ENCODE measurements at regions of chr2 and their contacts with region 1.

Region 1: GRCh38 chr2:216681683-216682082 is 13.7 kb downstream of the IGFBP5 start:
- DNase-seq: no peak
- ATAC-seq: no peak
- H3K4me3 ChIP-seq: no peak overlapping the region
- H3K27ac ChIP-seq: no peak overlapping the region
- H3K4me1 ChIP-seq: no peaks in the 10 kb centered on the region
- H3K27me3 ChIP-seq: peaks cover 3 to 45% of the 10 kb centered on the region in 2 experiments; a peak in 4 of 5 replicates
- CTCF ChIP-seq: no peak
- EP300 ChIP-seq: no peak
- POLR2A ChIP-seq: no peak
- RAD21 ChIP-seq: no peak

Region 2: DNA sequence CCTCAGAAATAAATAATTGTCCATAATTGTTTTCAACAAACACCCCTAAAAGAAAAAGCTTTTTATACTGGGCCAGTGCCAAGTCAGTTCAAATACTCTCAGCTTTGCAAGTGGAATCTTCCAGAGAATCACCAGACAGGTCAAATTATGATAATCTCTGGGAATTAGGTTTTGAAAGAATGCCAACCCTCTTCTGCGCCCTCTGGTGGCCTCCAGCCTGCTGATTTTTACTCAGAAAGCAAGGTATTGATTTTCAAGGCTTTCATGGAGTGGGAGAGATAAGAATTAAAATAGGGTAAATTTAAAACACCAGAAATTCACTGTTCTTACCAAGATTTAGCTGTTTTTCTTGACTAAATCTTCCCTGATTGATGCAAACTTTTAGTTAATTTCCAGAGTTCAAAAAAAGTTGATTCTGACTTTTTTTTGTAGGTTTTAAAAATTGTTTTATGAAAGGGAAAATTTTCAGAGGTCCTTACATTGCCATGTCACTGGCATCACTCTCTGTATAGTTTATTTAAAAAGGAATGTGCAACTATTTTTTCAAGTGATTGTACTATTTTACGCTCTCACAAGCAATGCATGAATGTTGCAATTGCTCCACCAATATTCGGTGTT is 461.1 kb after region 1 on chr2:
- CTCF ChIA-PET with region 1: interaction called, 9 read pairs
- POLR2A ChIA-PET with region 1: no interaction called
- in situ Hi-C with region 1: no loop called
- intact Hi-C with region 1: loop called (anchors 1 kb)
- DNase-seq: peak; percentile 38
- ATAC-seq: peak; percentile 64
- H3K4me3 ChIP-seq: no peak overlapping the region
- H3K27ac ChIP-seq: no peak overlapping the region
- H3K4me1 ChIP-seq: no peaks in the 10 kb centered on the region
- H3K27me3 ChIP-seq: 0 out of 5 replicates have a peak, but pooled peaks cover 0 to under 1% of the 10 kb centered on the region in 2 experiments
- CTCF ChIP-seq: peak; percentile 76
- EP300 ChIP-seq: no peak
- POLR2A ChIP-seq: no peak
- RAD21 ChIP-seq: peak; percentile 55; the same call in 1 of the 2 replicates

Region 3: DNA sequence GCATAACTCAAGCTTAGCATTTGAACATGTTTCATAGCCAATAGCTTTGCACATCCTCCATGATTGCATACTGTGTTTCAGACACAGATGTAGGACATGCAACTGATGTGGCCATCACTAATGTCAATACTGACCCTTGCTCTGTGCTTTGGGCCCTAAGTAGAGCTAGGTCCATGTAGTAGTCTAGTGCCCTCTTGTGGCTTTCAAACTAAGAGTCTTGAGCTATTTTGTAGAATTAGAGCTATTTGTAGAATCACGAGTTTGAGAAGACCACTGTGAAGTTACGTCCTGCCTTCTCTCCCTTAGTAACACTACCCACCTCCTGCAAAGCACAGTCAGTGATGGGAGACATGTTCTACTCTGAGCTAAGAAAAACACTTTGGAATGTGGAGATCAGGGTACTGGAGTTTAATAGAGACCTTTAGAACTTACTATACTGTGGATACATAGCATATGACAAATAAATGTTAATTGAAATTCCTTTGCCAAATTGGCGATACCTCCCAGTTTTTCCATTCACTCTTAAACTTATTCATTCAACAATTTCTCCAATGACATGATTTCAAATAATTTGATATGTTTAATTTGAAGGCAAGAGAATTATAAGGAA is 484.7 kb after region 1 on chr2:
- CTCF ChIA-PET with region 1: no interaction called
- POLR2A ChIA-PET with region 1: no interaction called
- in situ Hi-C with region 1: no loop called
- intact Hi-C with region 1: loop called (anchors 1 kb)
- DNase-seq: peak; percentile 46
- ATAC-seq: peak; percentile 89
- H3K4me3 ChIP-seq: no peak overlapping the region
- H3K27ac ChIP-seq: no peak overlapping the region
- H3K4me1 ChIP-seq: no peaks in the 10 kb centered on the region
- H3K27me3 ChIP-seq: peaks cover 0 to 6% of the 10 kb centered on the region in 2 experiments; a peak in 1 of 5 replicates
- CTCF ChIP-seq: peak; percentile 74
- EP300 ChIP-seq: no peak
- POLR2A ChIP-seq: no peak
- RAD21 ChIP-seq: peak; percentile 41; the same call in 1 of the 2 replicates

Measured in HepG2 (cell line).